ENCODE measurements at regions of chr6 and their contacts with region 1.

Region 1: DNA sequence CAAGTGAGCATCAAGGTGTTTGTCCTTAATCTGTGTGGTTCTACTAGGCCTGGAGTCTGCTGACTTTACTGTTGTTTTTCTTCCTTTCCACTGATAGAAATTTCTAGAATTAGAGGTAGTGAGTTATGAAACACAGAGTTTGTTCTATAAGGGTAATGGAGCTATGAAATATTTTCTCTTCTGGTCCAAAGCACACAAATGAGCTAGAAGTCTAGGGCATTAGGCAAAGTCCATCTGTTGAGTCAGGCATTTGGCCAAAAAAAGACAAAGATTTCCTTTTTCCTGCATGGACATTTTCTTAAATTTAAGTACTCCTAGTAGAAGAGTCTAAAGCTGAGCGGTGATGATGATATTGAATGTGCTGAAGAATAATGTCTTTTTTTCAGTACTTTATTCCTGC is 174.3 kb upstream of the STXBP5 start:
- DNase-seq: no peak
- ATAC-seq: no peak
- H3K4me3 ChIP-seq: no peak overlapping the region
- H3K27ac ChIP-seq: no peak overlapping the region
- H3K4me1 ChIP-seq: no peaks in the 10 kb centered on the region
- H3K27me3 ChIP-seq: no peaks in the 10 kb centered on the region
- CTCF ChIP-seq: no peak

Region 2: GRCh38 chr6:147058786-147059434 is 29.0 kb after region 1 on chr6:
- intact Hi-C with region 1: loop called in 1 of 10 experiments (anchors 2 kb)
- DNase-seq: no peak
- ATAC-seq: no peak
- H3K4me3 ChIP-seq: no peak overlapping the region
- H3K27ac ChIP-seq: no peak overlapping the region
- H3K4me1 ChIP-seq: peaks cover 0 to 5% (median 0%) of the 10 kb centered on the region in 9 donors
- H3K27me3 ChIP-seq: no peaks in the 10 kb centered on the region
- CTCF ChIP-seq: no peak